Activated CD4-positive, alpha-beta T cell treated with anti-CD3 and anti-CD28 coated beads, Interleukin-2, amount 10 ng/mL, durations not matched to agents 24 days and 14 days (primary cell): ENCODE measurements at regions of chr19 and their contacts with region 1.

Region 1: GRCh38 chr19:15234043-15234873 is 2.0 kb upstream of the EPHX3 start:
- DNase-seq: no peak
- H3K4me3 Mint-ChIP-seq: no peak overlapping the region
- H3K27ac Mint-ChIP-seq: no peak overlapping the region
- H3K4me1 Mint-ChIP-seq: peaks cover 5% of the 10 kb centered on the region
- H3K27me3 Mint-ChIP-seq: peaks cover 28% of the 10 kb centered on the region

Region 2: GRCh38 chr19:15177269-15178116 is 56.8 kb before region 1 on chr19:
- intact Hi-C with region 1: loop called (anchors 10 kb)
- DNase-seq: peak; percentile 95
- H3K4me3 Mint-ChIP-seq: peak overlapping the region; percentile 48
- H3K27ac Mint-ChIP-seq: no peak overlapping the region
- H3K4me1 Mint-ChIP-seq: peaks cover 4% of the 10 kb centered on the region
- H3K27me3 Mint-ChIP-seq: peaks cover 6% of the 10 kb centered on the region

Region 3: DNA sequence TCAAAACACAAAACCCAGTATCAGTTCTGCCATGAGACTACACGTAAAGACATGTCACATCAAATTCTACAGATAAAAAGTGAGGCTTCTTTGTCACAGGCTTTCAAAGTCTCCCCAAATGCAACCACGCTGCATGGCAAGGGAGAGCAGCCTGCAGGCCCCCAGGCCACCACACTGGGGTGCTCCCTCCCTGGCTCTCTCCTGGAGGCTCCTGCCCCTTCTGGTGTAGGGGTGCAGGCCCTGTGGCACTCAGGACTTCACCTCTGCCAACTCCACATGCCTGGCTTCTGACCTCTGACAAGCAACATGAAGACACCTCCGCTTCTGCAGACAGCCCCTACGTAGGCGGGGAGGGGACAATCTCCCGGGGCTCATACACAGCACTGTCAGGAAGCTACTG is 131.0 kb after region 1 on chr19:
- intact Hi-C with region 1: no loop called
- DNase-seq: no peak
- H3K4me3 Mint-ChIP-seq: no peak overlapping the region
- H3K27ac Mint-ChIP-seq: no peak overlapping the region
- H3K4me1 Mint-ChIP-seq: peaks cover 2% of the 10 kb centered on the region
- H3K27me3 Mint-ChIP-seq: no peaks in the 10 kb centered on the region